ENCODE measurements at regions of chr14 and their contacts with region 1.

Region 1: DNA sequence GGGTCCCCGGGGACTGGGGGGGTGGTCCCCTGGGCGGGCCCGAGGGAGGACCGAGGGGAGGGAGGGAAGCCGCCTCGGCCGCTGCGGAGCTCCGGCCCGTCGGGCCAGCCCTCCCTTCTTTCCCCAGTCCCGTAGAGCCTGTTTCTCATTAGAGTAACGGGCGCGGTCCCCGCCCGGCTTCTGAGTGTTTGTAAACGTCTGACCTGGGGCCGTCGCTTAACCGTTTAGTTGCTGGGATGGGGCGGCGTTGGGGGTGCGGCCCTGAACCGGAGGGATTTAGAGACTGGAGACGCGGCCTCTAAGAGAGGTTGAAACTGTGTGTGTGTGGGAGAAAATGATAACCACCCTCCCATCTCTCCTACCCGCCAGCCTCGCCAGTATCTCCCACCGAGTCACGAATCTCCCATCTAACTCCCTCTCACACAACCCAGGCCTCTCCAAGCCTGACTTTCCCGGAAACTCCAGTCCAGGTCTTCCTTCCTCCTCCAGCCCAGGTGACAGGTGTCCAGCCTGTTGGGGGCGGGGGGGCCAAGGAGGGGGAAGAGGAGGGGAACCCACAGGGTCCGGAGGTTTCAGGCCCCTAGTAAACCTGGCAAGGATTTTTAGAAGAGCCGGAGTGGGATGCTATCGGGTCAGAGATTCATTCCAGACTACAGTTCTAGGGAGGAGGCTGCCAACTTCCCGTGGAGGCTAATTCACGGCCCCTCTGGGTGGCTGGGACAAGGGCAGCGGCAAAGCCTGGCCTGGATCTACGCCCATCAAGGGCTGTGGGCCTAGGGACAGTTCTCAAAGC is 1.1 kb upstream of the NFATC4 start:
- DNase-seq: peak; percentile 91 to 97 (median 93)
- ATAC-seq: peak; percentile 84
- H3K4me3 ChIP-seq: peak overlapping the region; percentile 14 to 46
- H3K27ac ChIP-seq: peak overlapping the region; percentile 78 to 94
- H3K4me1 ChIP-seq: peaks cover 5 to 29% of the 10 kb centered on the region in 2 donors
- H3K27me3 ChIP-seq: peaks cover 0 to 58% of the 10 kb centered on the region in 2 donors
- CTCF ChIP-seq: no peak

Region 2: DNA sequence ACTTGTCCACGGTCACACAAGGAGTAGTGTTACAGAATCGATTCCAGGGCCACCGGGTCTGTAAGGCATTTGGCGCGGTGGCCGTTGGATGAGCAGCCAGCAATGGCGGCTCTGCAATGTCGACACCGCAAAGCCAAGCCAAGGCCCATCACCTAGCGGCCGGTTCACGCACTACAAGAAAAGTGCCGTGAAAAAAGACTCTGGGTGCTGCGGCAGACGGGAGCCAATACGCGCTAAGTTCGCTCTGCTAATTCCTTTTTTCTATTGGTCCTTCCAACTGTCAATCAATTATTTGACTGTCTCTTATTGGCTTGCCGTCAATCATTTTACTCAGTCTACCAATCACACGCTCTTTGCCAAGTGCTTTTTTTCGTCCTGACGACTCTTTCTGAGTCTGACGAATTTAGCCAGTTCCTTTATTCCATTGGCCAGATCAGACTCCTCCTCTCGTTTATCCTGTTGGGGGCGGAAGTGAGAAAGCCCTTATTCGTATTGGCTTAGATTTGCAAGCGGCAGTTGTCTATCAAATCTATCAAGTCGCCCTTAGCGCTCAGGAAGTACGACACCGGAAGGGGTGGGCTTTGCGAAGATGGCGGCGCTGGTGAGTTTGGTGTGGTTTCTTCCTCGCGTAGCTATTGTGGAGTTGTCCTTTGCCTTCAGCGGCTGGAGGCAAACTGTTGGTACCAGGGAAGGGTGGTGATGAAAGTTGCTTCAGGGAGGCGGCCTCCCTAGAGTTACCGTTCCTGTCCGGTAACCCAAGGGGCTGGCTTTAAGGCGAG is 897.6 kb before region 1 on chr14 and contains the start of gene NGDN:
- intact Hi-C with region 1: no loop called
- DNase-seq: peak; percentile 92 to 99 (median 96)
- ATAC-seq: peak; percentile 98
- H3K4me3 ChIP-seq: peak within 1 kb of the TSS; percentile 63 to 82
- H3K27ac ChIP-seq: peak within 1 kb of the TSS; percentile 77 to 80
- H3K4me1 ChIP-seq: peaks cover 6 to 16% of the 10 kb centered on the region in 2 donors
- H3K27me3 ChIP-seq: no peaks in the 10 kb centered on the region
- CTCF ChIP-seq: peak; percentile 76 to 92
- polyA plus RNA-seq, gene NGDN: 58.1 to 79.3 (median 61.6) TPM

Region 3: GRCh38 chr14:24431569-24432258 is 64.8 kb after region 1 on chr14:
- intact Hi-C with region 1: loop called in 1 of 2 experiments (anchors 5 kb)
- DNase-seq: peak; percentile 74 to 94 (median 92)
- ATAC-seq: peak; percentile 81
- H3K4me3 ChIP-seq: peak overlapping the region; percentile 83 to 90
- H3K27ac ChIP-seq: peak overlapping the region; percentile 96 to 97
- H3K4me1 ChIP-seq: peaks cover 23 to 45% of the 10 kb centered on the region in 2 donors
- H3K27me3 ChIP-seq: no peaks in the 10 kb centered on the region
- CTCF ChIP-seq: peak; percentile 86 to 94